ENCODE measurements at regions of chr22 and their contacts with region 1.

Region 1: GRCh38 chr22:26502688-26503561 is 9.3 kb downstream of the TFIP11 start:
- DNase-seq: peak; percentile 66
- CTCF ChIP-seq: peak; percentile 74

Region 2: GRCh38 chr22:26483439-26484359 is 19.2 kb before region 1 on chr22 and contains the starts of genes HPS4 and SRRD:
- CTCF ChIA-PET with region 1: interaction called, 16 read pairs
- POLR2A ChIA-PET with region 1: no interaction called
- DNase-seq: peak; percentile 94
- CTCF ChIP-seq: no peak

Region 3: DNA sequence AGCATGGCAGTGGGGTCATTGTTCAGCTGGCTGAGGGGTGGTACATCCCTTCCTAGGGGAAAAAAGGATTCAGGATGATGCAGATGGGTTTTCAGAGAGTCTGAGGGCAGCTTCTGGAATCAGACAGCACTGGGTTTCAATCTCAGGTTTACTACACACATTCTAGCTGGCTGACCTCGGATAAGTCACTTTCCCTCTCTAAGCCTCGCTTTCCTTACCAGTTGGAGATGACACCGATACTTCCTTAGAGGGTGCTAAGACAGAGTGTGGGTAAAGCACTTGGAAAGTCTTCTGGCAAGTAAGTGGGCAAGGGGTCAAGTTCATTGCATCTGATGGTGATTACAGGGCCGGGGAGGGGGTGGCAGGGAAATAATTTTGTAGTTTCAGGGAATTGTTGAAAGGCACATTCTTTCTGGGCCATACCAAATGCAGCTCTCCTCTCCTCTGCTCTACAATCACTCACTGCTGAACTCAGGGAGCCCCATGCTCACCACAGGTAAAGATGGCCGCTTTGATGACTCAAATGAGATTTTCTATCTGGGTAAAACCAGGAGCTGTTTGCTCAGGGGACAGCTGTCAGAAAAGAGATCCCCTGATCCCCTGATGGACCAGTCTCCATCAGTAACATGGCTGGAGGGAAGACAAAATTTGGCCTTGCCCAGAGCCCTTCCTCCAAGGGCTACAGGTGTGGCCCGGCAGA is 147.9 kb after region 1 on chr22:
- CTCF ChIA-PET with region 1: interaction called, 10 read pairs
- POLR2A ChIA-PET with region 1: no interaction called
- DNase-seq: no peak
- CTCF ChIP-seq: no peak

Region 4: GRCh38 chr22:26665813-26666231 is 162.9 kb after region 1 on chr22:
- CTCF ChIA-PET with region 1: interaction called, 23 read pairs
- POLR2A ChIA-PET with region 1: interaction called, 5 read pairs
- DNase-seq: no peak
- CTCF ChIP-seq: no peak

Measured in GM10248 (cell line).